ENCODE measurements at regions of chr6 and their contacts with region 1.

Region 1: DNA sequence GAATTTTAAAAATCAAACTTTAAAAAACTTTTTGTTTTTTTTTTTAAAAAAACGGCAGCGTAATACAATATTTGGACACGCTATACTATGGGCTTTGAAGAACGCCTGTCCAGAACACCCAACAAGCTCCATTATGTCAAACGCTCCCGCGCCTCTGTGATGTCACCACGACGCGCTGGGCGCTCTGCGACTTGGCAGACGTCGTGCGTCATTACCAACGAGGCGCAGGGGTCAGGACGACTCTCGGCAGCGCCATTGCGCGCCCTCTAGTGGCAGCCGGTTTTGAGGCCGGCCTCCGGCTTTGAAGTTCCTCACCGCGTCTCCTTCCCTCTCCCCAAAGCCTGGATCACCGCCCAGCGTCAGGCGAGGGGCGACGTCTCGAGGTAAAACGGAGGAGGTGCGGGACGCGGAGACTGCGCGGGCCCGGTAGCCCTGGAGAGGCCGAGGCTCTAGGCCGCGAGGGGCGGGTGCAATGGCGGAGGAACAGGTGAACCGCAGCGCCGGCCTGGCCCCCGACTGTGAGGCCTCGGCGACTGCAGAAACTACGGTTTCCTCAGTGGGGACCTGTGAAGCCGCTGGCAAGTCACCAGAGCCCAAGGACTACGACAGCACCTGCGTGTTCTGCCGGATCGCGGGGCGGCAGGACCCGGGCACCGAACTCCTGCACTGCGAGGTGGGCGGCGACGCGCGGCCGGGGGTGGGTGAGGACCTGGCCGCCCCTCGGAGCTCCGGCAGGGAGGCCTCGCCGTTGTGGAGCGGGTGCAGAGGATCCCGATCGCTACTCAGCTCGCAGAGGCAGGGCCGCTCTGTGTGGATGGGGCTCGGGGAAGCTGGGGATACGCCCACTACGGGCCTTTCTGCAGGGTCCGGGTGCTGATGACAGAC is at the start of gene HINT3:
- DNase-seq: peak; percentile 97 to 99 (median 98)
- ATAC-seq: peak; percentile 96 to 98 (median 97)
- H3K4me3 ChIP-seq: peak within 1 kb of the TSS; percentile 71 to 94 (median 85)
- H3K27ac ChIP-seq: peak within 1 kb of the TSS; percentile 67 to 97 (median 91)
- H3K4me1 ChIP-seq: peaks cover 0 to 32% (median 22%) of the 10 kb centered on the region in 12 donors
- H3K27me3 ChIP-seq: no peaks in the 10 kb centered on the region
- CTCF ChIP-seq: peak; percentile 93 to 100 (median 99)
- POLR2A ChIP-seq: peak in 1 of 2 donors; percentile 49
- total RNA-seq, gene HINT3: 26.3 to 40.0 (median 33.8) TPM

Region 2: GRCh38 chr6:125301435-125302391 is 655.0 kb before region 1 on chr6 and contains the start of gene HDDC2:
- intact Hi-C with region 1: loop called in 3 of 10 experiments (anchors 5 to 10 kb)
- DNase-seq: peak; percentile 84 to 91 (median 87)
- ATAC-seq: peak; percentile 65 to 93 (median 92)
- H3K4me3 ChIP-seq: peak within 1 kb of the TSS; percentile 46 to 84 (median 74)
- H3K27ac ChIP-seq: peak within 1 kb of the TSS; percentile 83 to 97 (median 92)
- H3K4me1 ChIP-seq: peaks cover 0 to 31% (median 21%) of the 10 kb centered on the region in 12 donors
- H3K27me3 ChIP-seq: no peaks in the 10 kb centered on the region
- CTCF ChIP-seq: no peak
- POLR2A ChIP-seq: peak in 1 of 2 donors; percentile 65
- total RNA-seq, gene HDDC2: 70.2 to 123 (median 92.6) TPM

Region 3: GRCh38 chr6:125314019-125314581 is 642.6 kb before region 1 on chr6:
- intact Hi-C with region 1: loop called in 8 of 10 experiments (anchors 5 to 10 kb)
- DNase-seq: peak; percentile 63 to 77 (median 69)
- ATAC-seq: peak; percentile 83 to 95 (median 91)
- H3K4me3 ChIP-seq: no peak overlapping the region
- H3K27ac ChIP-seq: peak overlapping the region in 2 of 12 donors; percentile 24 to 25
- H3K4me1 ChIP-seq: peaks cover 0 to 6% (median 1%) of the 10 kb centered on the region in 12 donors
- H3K27me3 ChIP-seq: peaks cover 0 to 3% (median 0%) of the 10 kb centered on the region in 9 donors
- CTCF ChIP-seq: peak; percentile 72 to 97 (median 88)
- POLR2A ChIP-seq: no peak

Region 4: GRCh38 chr6:125346201-125346925 is 610.4 kb before region 1 on chr6:
- intact Hi-C with region 1: no loop called
- DNase-seq: peak in 3 of 5 donors; percentile 22 to 43 (median 27)
- ATAC-seq: peak in 2 of 4 donors; percentile 38 to 78
- H3K4me3 ChIP-seq: peak overlapping the region in 8 of 12 donors; percentile 2 to 36 (median 27)
- H3K27ac ChIP-seq: peak overlapping the region in 11 of 12 donors; percentile 38 to 84 (median 54)
- H3K4me1 ChIP-seq: peaks cover 0 to 8% (median 0%) of the 10 kb centered on the region in 12 donors
- H3K27me3 ChIP-seq: no peaks in the 10 kb centered on the region
- CTCF ChIP-seq: no peak
- POLR2A ChIP-seq: no peak

Region 5: DNA sequence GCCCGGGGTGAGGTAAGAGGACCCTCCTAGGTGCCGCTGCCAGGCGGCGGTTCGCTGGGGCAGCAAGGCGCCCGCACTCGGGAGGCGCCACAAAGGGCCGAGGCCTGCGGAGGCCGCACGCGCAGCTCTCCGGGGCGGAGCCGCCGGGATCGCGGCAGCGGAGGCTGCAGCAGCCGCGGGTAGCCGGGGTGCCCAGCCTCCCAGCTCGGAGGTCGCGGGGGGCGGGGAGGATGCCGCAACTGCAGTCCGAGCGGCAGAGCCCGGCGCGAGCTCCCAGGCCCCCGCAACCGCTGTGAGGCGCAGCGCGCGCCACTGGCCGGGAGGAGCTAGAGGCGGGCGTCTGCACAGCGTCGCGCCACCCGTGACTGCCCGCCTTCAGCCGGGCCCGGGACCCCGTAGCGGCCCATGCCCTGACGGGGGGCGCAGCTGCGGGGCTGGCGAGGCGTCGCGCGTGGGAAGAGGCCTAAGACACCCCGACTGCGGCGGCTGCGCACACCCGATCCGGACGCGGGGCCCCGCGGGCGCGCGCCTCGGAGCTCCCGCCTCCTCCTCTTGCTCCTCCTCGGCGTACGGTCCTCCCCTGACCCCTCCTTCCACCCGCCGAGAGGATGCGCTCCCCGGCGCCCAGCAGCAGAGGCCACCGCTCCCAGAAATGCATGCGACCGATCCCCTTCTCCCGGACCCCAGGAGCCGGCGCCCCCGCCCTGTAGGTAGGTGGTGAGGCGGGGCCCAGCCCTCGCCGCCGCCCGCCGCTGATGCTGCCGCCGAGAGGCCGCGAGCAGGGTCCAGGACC is 166.2 kb before region 1 on chr6 and contains the start of gene NCOA7:
- intact Hi-C with region 1: loop called in 6 of 10 experiments (anchors 2 to 5 kb)
- DNase-seq: peak; percentile 87 to 92 (median 89)
- ATAC-seq: peak; percentile 79 to 96 (median 93)
- H3K4me3 ChIP-seq: peak within 1 kb of the TSS; percentile 50 to 98 (median 82)
- H3K27ac ChIP-seq: peak within 1 kb of the TSS; percentile 87 to 98 (median 96)
- H3K4me1 ChIP-seq: peaks cover 0 to 52% (median 22%) of the 10 kb centered on the region in 12 donors
- H3K27me3 ChIP-seq: no peaks in the 10 kb centered on the region
- CTCF ChIP-seq: peak in 4 of 12 donors; percentile 4 to 32 (median 16)
- POLR2A ChIP-seq: peak; percentile 25 to 75
- total RNA-seq, gene NCOA7: 6.4 to 23.1 (median 9.9) TPM

Region 6: DNA sequence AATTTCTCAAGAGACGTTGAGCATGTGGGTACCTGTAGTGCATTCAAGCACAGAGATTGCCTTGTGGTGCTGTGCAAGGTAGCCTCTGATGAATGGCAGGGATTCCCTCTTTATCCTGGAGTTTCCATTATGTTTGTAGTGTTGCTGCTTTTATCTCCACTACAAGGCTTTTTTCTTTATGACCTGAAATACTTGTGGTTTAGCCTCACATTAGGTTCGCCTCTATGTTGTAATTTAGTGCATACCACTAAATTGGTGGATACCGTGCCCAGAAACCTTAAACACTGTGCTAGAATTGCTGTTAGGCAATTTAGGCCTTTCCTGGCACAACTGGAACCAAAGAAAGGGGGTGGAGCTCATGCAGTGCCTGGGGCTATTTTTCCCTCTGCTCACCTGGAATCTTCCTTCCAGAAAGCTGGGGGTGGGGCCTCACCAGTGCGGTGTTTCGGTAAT is 89.2 kb before region 1 on chr6:
- intact Hi-C with region 1: loop called in 2 of 10 experiments (anchors 10 kb)
- DNase-seq: no peak
- ATAC-seq: no peak
- H3K4me3 ChIP-seq: no peak overlapping the region
- H3K27ac ChIP-seq: no peak overlapping the region
- H3K4me1 ChIP-seq: peaks cover 0 to 15% (median 5%) of the 10 kb centered on the region in 12 donors
- H3K27me3 ChIP-seq: no peaks in the 10 kb centered on the region
- CTCF ChIP-seq: no peak
- POLR2A ChIP-seq: no peak

Region 7: GRCh38 chr6:125918681-125919566 is 37.8 kb before region 1 on chr6:
- intact Hi-C with region 1: loop called in 3 of 10 experiments (anchors 5 kb)
- DNase-seq: peak in 2 of 5 donors; percentile 23 to 30
- ATAC-seq: peak in 3 of 4 donors; percentile 85 to 89 (median 88)
- H3K4me3 ChIP-seq: peak overlapping the region in 9 of 12 donors; percentile 26 to 52 (median 37)
- H3K27ac ChIP-seq: peak overlapping the region; percentile 31 to 86 (median 66)
- H3K4me1 ChIP-seq: peaks cover 0 to 51% (median 9%) of the 10 kb centered on the region in 12 donors
- H3K27me3 ChIP-seq: no peaks in the 10 kb centered on the region
- CTCF ChIP-seq: no peak
- POLR2A ChIP-seq: no peak

Region 8: GRCh38 chr6:126054258-126054702 is 97.5 kb after region 1 on chr6:
- intact Hi-C with region 1: no loop called
- DNase-seq: no peak
- ATAC-seq: peak in 1 of 4 donors; percentile 13
- H3K4me3 ChIP-seq: no peak overlapping the region
- H3K27ac ChIP-seq: no peak overlapping the region
- H3K4me1 ChIP-seq: no peaks in the 10 kb centered on the region
- H3K27me3 ChIP-seq: no peaks in the 10 kb centered on the region
- CTCF ChIP-seq: no peak
- POLR2A ChIP-seq: no peak